B cell (primary cell): ENCODE measurements at regions of chr12 and their contacts with region 1.

Region 1: GRCh38 chr12:7933255-7933729 is 2.7 kb downstream of the SLC2A3 start:
- DNase-seq: peak; percentile 95
- ATAC-seq: peak; percentile 80
- H3K4me3 ChIP-seq: peak overlapping the region; percentile 66 to 100 (median 81)
- H3K4me3 Mint-ChIP-seq: no peak overlapping the region
- H3K27ac ChIP-seq: peak overlapping the region; percentile 82 to 90
- H3K27ac Mint-ChIP-seq: no peak overlapping the region
- H3K4me1 ChIP-seq: peaks cover 23 to 41% of the 10 kb centered on the region in 2 donors
- H3K4me1 Mint-ChIP-seq: peaks cover 4% of the 10 kb centered on the region
- H3K27me3 ChIP-seq: no peaks in the 10 kb centered on the region
- H3K27me3 Mint-ChIP-seq: no peaks in the 10 kb centered on the region
- CTCF ChIP-seq: peak; percentile 78

Region 2: GRCh38 chr12:7859552-7859951 is 73.7 kb before region 1 on chr12:
- CTCF ChIA-PET with region 1: interaction called, 21 read pairs
- POLR2A ChIA-PET with region 1: interaction called, 3 read pairs
- intact Hi-C with region 1: loop called (anchors 2 kb)
- DNase-seq: no peak
- ATAC-seq: no peak
- H3K4me3 ChIP-seq: no peak overlapping the region
- H3K4me3 Mint-ChIP-seq: no peak overlapping the region
- H3K27ac ChIP-seq: no peak overlapping the region
- H3K27ac Mint-ChIP-seq: no peak overlapping the region
- H3K4me1 ChIP-seq: peaks cover 3 to 4% of the 10 kb centered on the region in 2 donors
- H3K4me1 Mint-ChIP-seq: peaks cover 9% of the 10 kb centered on the region
- H3K27me3 ChIP-seq: peaks cover 0 to 8% (median 0%) of the 10 kb centered on the region in 4 experiments
- H3K27me3 Mint-ChIP-seq: no peaks in the 10 kb centered on the region
- CTCF ChIP-seq: no peak

Region 3: DNA sequence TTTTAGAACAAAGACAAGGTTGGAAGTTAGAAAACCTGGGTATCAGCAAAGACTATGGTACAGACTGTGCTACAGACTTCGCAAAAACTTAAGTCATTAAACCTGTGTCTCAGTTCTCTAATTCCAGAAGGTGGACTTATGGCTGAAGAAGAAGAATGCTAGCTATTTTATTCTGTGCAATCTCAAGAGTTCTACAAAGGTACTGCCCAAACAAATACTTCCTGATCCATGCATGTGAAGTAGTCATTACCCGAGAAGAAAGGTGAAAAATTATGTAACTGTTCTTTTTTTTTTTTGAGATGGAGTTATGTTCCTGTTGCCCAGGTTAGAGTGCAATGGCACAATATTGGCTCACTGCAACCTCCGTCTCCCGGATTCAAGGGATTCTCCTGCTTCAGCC is 48.2 kb after region 1 on chr12:
- CTCF ChIA-PET with region 1: interaction called, 25 read pairs
- POLR2A ChIA-PET with region 1: interaction called, 6 read pairs
- intact Hi-C with region 1: loop called (anchors 1 kb)
- DNase-seq: no peak
- ATAC-seq: no peak
- H3K4me3 ChIP-seq: no peak overlapping the region
- H3K4me3 Mint-ChIP-seq: no peak overlapping the region
- H3K27ac ChIP-seq: no peak overlapping the region
- H3K27ac Mint-ChIP-seq: no peak overlapping the region
- H3K4me1 ChIP-seq: peaks cover 14 to 19% of the 10 kb centered on the region in 2 donors
- H3K4me1 Mint-ChIP-seq: peaks cover 16% of the 10 kb centered on the region
- H3K27me3 ChIP-seq: no peaks in the 10 kb centered on the region
- H3K27me3 Mint-ChIP-seq: no peaks in the 10 kb centered on the region
- CTCF ChIP-seq: no peak

Region 4: DNA sequence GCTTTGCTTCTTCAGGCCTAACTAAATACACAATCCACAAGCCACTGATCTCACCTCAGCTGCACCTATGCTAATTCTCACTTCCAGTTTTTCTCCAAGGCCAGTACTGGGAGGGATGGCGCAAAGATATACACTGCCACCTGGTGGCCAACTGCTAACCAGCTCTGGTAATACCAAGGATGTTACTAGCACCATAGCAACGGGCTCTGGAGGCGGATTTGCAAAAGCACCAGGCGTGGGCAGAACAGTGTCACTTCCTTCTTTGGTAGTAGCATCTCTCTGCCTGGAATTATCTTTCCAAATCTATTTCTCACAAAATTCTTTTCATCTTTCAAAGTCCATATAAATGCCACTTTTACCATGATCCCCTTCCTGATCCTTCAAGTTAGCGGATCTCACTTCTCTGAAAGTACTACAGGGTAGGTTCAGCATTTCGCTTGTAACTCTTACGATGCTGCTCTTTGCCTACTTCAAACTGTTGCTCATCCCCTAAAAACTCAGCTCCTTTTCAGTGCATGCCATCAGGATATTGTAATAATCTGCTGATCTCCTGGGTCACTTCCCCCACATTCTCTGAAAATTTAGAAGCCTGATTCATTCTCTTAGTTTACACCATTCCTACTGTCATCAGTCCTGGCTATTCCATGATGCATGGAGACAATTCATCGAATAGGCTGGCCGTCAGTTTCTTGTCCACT is 62.1 kb after region 1 on chr12:
- CTCF ChIA-PET with region 1: interaction called, 142 read pairs
- POLR2A ChIA-PET with region 1: interaction called, 15 read pairs
- intact Hi-C with region 1: loop called (anchors 1 kb)
- DNase-seq: peak; percentile 93
- ATAC-seq: peak; percentile 100
- H3K4me3 ChIP-seq: no peak overlapping the region
- H3K4me3 Mint-ChIP-seq: no peak overlapping the region
- H3K27ac ChIP-seq: peak overlapping the region; percentile 35 to 82
- H3K27ac Mint-ChIP-seq: no peak overlapping the region
- H3K4me1 ChIP-seq: peaks cover 10 to 14% of the 10 kb centered on the region in 2 donors
- H3K4me1 Mint-ChIP-seq: peaks cover 6% of the 10 kb centered on the region
- H3K27me3 ChIP-seq: no peaks in the 10 kb centered on the region
- H3K27me3 Mint-ChIP-seq: no peaks in the 10 kb centered on the region
- CTCF ChIP-seq: peak; percentile 87

Region 5: DNA sequence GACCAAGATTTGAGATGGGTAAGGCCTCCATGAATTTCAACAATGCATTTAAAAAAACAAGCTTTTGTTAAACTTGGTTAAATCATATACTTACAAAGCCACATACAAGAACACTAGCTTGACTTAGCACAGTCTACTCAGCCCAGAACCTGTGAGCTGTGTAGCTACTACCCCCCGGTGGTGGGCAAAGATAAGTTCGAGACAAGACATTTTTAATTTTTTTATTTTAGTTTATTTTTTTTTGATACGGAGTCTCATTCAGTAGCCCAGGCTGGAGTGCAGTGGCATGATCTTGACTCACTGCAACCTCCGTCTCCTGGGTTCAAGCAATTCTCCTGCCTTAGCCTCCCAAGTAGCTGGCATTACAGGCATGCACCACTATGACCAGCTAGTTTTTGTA is 145.1 kb after region 1 on chr12:
- CTCF ChIA-PET with region 1: interaction called, 11 read pairs
- POLR2A ChIA-PET with region 1: no interaction called
- intact Hi-C with region 1: loop called (anchors 1 kb)
- DNase-seq: peak; percentile 56
- ATAC-seq: no peak
- H3K4me3 ChIP-seq: no peak overlapping the region
- H3K4me3 Mint-ChIP-seq: no peak overlapping the region
- H3K27ac ChIP-seq: no peak overlapping the region
- H3K27ac Mint-ChIP-seq: no peak overlapping the region
- H3K4me1 ChIP-seq: peaks cover 23 to 24% of the 10 kb centered on the region in 2 donors
- H3K4me1 Mint-ChIP-seq: peaks cover 38% of the 10 kb centered on the region
- H3K27me3 ChIP-seq: no peaks in the 10 kb centered on the region
- H3K27me3 Mint-ChIP-seq: no peaks in the 10 kb centered on the region
- CTCF ChIP-seq: peak; percentile 61